A673 (cell line): ENCODE measurements at regions of chr9 and their contacts with region 1.

Region 1: GRCh38 chr9:128067876-128068613 is at the start of gene SLC25A25:
- DNase-seq: peak; percentile 99
- H3K4me3 ChIP-seq: peak within 1 kb of the TSS; percentile 94
- H3K27ac ChIP-seq: peak within 1 kb of the TSS; percentile 98
- H3K4me1 ChIP-seq: peaks cover 40% of the 10 kb centered on the region
- H3K27me3 ChIP-seq: no peaks in the 10 kb centered on the region
- CTCF ChIP-seq: no peak
- total RNA-seq, gene SLC25A25: 24.7 and 26.1 TPM in 2 replicates

Region 2: DNA sequence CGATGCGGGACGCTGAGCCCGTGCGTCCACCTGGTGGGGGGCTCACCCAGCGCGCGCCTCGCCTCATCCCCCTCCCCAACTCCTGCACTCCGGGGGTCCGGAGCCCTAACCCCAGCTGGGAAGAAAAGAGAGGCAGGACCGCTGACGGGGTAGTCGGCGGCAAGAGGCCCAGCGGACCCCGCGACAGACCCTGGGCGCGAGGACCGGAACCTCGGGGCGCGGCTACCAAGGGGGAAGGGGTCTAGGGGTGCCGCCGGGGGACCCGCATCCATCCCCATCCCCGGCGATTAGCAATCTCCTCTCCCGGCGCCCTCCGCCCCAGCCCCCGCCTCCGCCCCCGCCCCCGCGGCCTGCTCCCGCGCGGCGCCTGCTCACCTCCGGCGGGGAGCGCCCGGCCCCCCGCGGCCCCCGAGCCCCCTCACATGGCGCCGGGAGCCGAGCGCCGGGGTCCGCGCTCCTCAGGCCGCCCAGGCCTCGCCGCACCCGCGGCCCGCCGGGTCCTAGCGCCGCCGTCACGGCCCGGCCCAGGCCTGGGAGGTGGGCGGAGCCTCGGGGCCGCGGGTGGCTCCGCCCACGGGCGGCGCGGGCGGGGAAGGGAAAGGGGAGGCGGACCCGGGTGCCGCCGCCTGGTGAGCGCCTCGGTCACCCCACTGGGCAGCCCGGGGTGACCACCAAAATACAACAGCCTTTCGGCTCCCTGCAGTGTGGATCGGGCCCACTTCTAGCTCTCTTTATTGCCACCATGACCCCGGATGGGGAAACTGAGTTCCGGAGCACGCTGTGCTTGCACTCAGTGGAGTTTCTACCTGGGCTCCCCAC is 168.7 kb before region 1 on chr9 and contains the start of gene ST6GALNAC6:
- CTCF ChIA-PET with region 1: no interaction called
- POLR2A ChIA-PET with region 1: interaction called, 10 read pairs
- intact Hi-C with region 1: no loop called
- DNase-seq: peak; percentile 85
- H3K4me3 ChIP-seq: peak within 1 kb of the TSS; percentile 96
- H3K27ac ChIP-seq: peak within 1 kb of the TSS; percentile 85
- H3K4me1 ChIP-seq: peaks cover 9% of the 10 kb centered on the region
- H3K27me3 ChIP-seq: no peaks in the 10 kb centered on the region
- CTCF ChIP-seq: no peak
- total RNA-seq, gene ST6GALNAC6: 34.7 and 40.4 TPM in 2 replicates

Region 3: DNA sequence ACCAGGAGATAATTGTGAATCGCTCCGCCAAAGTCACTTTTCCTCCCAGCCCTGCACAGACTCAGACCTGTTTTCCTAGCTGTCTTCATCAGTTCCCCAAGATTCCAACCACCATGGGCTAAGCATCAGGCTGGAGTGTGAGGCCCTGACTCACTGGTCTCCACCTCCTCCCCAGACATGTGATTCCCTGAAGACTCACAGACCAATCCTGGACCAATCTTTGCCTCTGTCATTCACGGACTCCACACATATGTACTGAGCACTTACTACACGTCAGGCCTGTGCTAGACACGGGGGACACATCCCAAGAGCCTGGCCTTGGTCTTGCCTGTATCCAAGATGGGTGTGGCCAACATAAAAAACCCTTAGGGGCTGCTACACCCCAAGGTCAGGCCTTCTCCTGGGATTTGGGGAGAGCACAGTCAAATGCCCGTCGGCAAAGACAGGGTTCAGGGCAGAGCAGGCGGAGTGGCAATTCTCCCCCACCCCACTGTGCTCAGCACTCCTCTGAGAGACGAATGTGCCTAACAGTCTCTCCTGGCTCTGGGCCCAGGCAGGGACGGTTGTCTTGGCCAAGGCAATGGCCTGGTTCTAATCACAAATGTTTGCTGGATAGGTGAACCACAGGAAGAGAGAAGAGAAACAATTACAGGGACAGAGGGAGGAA is 99.2 kb before region 1 on chr9:
- CTCF ChIA-PET with region 1: no interaction called
- POLR2A ChIA-PET with region 1: no interaction called
- intact Hi-C with region 1: loop called (anchors 5 kb)
- DNase-seq: no peak
- H3K4me3 ChIP-seq: no peak overlapping the region
- H3K27ac ChIP-seq: peak overlapping the region; percentile 96
- H3K4me1 ChIP-seq: peaks cover 89% of the 10 kb centered on the region
- H3K27me3 ChIP-seq: no peaks in the 10 kb centered on the region
- CTCF ChIP-seq: no peak

Region 4: GRCh38 chr9:128088253-128088945 is 20.4 kb after region 1 on chr9:
- CTCF ChIA-PET with region 1: no interaction called
- POLR2A ChIA-PET with region 1: no interaction called
- intact Hi-C with region 1: no loop called
- DNase-seq: no peak
- H3K4me3 ChIP-seq: no peak overlapping the region
- H3K27ac ChIP-seq: peak overlapping the region; percentile 32
- H3K4me1 ChIP-seq: peaks cover 32% of the 10 kb centered on the region
- H3K27me3 ChIP-seq: no peaks in the 10 kb centered on the region
- CTCF ChIP-seq: no peak

Region 5: DNA sequence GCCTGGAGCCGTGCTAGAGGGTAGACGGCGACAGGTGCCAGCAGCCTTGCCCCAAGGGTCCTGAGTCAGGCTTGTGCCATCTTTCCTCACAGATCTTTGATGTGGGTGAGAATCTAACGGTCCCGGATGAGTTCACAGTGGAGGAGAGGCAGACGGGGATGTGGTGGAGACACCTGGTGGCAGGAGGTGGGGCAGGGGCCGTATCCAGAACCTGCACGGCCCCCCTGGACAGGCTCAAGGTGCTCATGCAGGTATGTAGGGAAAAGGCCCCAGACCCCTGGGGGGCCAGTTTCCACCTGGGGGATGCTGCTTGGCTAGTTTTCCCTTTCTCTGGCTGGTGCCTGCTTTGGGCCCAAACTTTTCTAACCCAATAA is 35.5 kb after region 1 on chr9:
- CTCF ChIA-PET with region 1: no interaction called
- POLR2A ChIA-PET with region 1: no interaction called
- intact Hi-C with region 1: no loop called
- DNase-seq: no peak
- H3K4me3 ChIP-seq: no peak overlapping the region
- H3K27ac ChIP-seq: no peak overlapping the region
- H3K4me1 ChIP-seq: peaks cover 18% of the 10 kb centered on the region
- H3K27me3 ChIP-seq: no peaks in the 10 kb centered on the region
- CTCF ChIP-seq: 0 out of 2 replicates have a peak, but pooled peaks have one; percentile 31